SK-N-SH (cell line): ENCODE measurements at regions of chr17 and their contacts with region 1.

Region 1: GRCh38 chr17:46044286-46044928 is 45.4 kb downstream of the STH start:
- DNase-seq: peak; percentile 70
- H3K4me3 ChIP-seq: no peak overlapping the region
- H3K27ac ChIP-seq: peak overlapping the region; percentile 2 to 9; a peak in 1 of 4 replicates
- H3K4me1 ChIP-seq: peaks cover 4 to 10% of the 10 kb centered on the region in 2 experiments; a peak in 3 of 4 replicates
- H3K27me3 ChIP-seq: no peaks in the 10 kb centered on the region
- CTCF ChIP-seq: peak; percentile 99
- EP300 ChIP-seq: no peak
- RAD21 ChIP-seq: peak; percentile 83

Region 2: DNA sequence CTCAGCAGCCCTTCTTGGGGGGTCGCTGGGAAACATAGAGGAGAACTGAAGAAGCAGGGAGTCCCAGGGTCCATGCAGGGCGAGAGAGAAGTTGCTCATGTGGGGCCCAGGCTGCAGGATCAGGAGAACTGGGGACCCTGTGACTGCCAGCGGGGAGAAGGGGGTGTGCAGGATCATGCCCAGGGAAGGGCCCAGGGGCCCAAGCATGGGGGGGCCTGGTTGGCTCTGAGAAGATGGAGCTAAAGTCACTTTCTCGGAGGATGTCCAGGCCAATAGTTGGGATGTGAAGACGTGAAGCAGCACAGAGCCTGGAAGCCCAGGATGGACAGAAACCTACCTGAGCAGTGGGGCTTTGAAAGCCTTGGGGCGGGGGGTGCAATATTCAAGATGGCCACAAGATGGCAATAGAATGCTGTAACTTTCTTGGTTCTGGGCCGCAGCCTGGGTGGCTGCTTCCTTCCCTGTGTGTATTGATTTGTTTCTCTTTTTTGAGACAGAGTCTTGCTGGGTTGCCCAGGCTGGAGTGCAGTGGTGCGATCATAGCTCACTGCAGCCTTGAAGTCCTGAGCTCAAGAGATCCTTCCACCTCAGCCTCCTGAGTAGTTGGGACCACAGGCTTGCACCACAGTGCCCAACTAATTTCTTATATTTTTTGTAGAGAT is 42.0 kb before region 1 on chr17:
- CTCF ChIA-PET with region 1: interaction called, 58 read pairs
- POLR2A ChIA-PET with region 1: no interaction called
- DNase-seq: peak; percentile 89
- H3K4me3 ChIP-seq: no peak overlapping the region
- H3K27ac ChIP-seq: no peak overlapping the region
- H3K4me1 ChIP-seq: peaks cover 0 to 9% of the 10 kb centered on the region in 2 experiments; a peak in 1 of 4 replicates
- H3K27me3 ChIP-seq: no peaks in the 10 kb centered on the region
- CTCF ChIP-seq: peak; percentile 98
- EP300 ChIP-seq: no peak
- RAD21 ChIP-seq: peak; percentile 96

Region 3: GRCh38 chr17:46061435-46061834 is 17.0 kb after region 1 on chr17:
- CTCF ChIA-PET with region 1: interaction called, 48 read pairs
- POLR2A ChIA-PET with region 1: no interaction called
- DNase-seq: no peak
- H3K4me3 ChIP-seq: no peak overlapping the region
- H3K27ac ChIP-seq: no peak overlapping the region
- H3K4me1 ChIP-seq: peaks cover 2 to 24% of the 10 kb centered on the region in 2 experiments; a peak in 3 of 4 replicates
- H3K27me3 ChIP-seq: no peaks in the 10 kb centered on the region
- CTCF ChIP-seq: peak; percentile 62
- EP300 ChIP-seq: no peak
- RAD21 ChIP-seq: peak; percentile 49

Region 4: GRCh38 chr17:46078675-46079074 is 34.3 kb after region 1 on chr17:
- CTCF ChIA-PET with region 1: interaction called, 15 read pairs
- POLR2A ChIA-PET with region 1: no interaction called
- DNase-seq: no peak
- H3K4me3 ChIP-seq: no peak overlapping the region
- H3K27ac ChIP-seq: no peak overlapping the region
- H3K4me1 ChIP-seq: peaks cover 3 to 8% of the 10 kb centered on the region in 2 experiments; a peak in 3 of 4 replicates
- H3K27me3 ChIP-seq: no peaks in the 10 kb centered on the region
- CTCF ChIP-seq: no peak
- EP300 ChIP-seq: no peak
- RAD21 ChIP-seq: no peak

Region 5: DNA sequence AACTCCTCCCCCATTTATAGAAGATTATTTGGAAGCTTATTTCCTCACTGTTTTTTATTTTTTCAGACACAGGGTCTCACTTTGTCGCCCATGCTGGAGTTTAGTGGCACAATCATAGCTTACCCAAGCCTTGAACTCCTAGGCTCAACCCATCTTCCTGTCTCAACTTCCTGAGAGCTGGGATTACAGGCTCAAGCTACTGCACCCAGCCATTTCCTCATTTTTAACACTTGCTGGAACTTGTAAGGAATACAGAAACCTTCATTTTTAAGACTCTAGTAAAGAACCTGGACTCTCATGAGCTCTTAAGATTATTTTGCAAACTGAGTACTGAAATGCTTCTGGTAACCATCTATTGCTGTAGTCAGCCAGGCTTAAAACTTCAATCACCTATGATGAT is 118.9 kb after region 1 on chr17:
- CTCF ChIA-PET with region 1: interaction called, 10 read pairs
- POLR2A ChIA-PET with region 1: no interaction called
- DNase-seq: no peak
- H3K4me3 ChIP-seq: no peak overlapping the region
- H3K27ac ChIP-seq: no peak overlapping the region
- H3K4me1 ChIP-seq: peaks cover 8 to 23% of the 10 kb centered on the region in 2 experiments; a peak in 3 of 4 replicates
- H3K27me3 ChIP-seq: no peaks in the 10 kb centered on the region
- CTCF ChIP-seq: no peak
- EP300 ChIP-seq: no peak
- RAD21 ChIP-seq: no peak

Region 6: DNA sequence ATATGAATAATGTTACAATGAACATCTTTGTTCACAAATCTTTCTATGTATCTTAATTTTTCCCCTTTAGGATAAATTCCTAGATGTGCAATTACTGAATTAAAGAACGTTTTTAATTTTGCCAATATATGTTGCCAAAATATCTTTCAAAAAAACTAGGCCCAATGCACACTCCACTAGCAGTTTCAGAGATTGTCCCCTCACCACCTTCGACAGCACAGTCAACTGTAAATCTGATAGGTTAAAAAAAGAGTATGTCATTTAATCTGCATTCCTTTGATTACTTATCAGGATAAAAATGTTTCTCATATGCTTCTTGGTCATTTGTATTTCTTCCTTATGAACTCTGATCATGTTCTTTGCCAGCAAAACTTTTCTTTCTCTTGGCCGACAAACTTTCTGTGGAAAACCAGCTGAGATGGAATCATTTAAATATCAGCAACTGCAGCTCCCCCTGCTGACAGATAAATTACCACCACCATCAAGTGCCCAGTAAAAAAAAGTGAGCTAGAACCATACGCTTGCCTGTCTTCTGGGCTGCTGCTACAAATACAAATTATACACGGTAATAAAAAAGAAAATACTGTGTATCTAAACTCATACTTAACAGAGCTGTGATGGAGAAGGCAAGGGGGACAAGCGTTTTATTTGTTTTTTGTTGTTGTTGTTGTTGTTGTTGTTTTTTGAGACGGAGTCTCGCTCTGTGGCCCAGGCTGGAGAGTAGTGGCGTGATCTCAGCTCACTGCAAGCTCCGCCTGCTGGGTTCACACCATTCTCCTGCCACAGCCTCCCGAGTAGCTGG is 168.4 kb after region 1 on chr17:
- CTCF ChIA-PET with region 1: interaction called, 43 read pairs
- POLR2A ChIA-PET with region 1: no interaction called
- DNase-seq: peak; percentile 77
- H3K4me3 ChIP-seq: peak overlapping the region in 1 of 2 experiments; percentile 16; a peak in 1 of 4 replicates
- H3K27ac ChIP-seq: no peak overlapping the region
- H3K4me1 ChIP-seq: no peaks in the 10 kb centered on the region
- H3K27me3 ChIP-seq: no peaks in the 10 kb centered on the region
- CTCF ChIP-seq: peak; percentile 98
- EP300 ChIP-seq: no peak
- RAD21 ChIP-seq: peak; percentile 83